ENCODE measurements at regions of chr22 and their contacts with region 1.

Region 1: GRCh38 chr22:50507991-50508884 is at the start of gene NCAPH2:
- DNase-seq: peak; percentile 83
- ATAC-seq: peak; percentile 69
- H3K4me3 ChIP-seq: peak within 1 kb of the TSS; percentile 100
- H3K27ac ChIP-seq: peak within 1 kb of the TSS; percentile 90
- H3K4me1 ChIP-seq: peaks cover 9% of the 10 kb centered on the region
- H3K27me3 ChIP-seq: no peaks in the 10 kb centered on the region
- CTCF ChIP-seq: peak in 1 of 3 experiments; percentile 33; a peak in 2 of 6 replicates
- EP300 ChIP-seq: no peak
- POLR2A ChIP-seq: peak; percentile 98
- RAD21 ChIP-seq: peak; percentile 16; the same call in 1 of the 2 replicates
- polyA plus RNA-seq, gene NCAPH2: 5.0 to 16.9 TPM

Region 2: GRCh38 chr22:50308536-50308935 is 199.7 kb before region 1 on chr22:
- CTCF ChIA-PET with region 1: no interaction called
- POLR2A ChIA-PET with region 1: no interaction called
- RAD21 ChIA-PET with region 1: no interaction called
- SMC1A ChIA-PET with region 1: no interaction called
- in situ Hi-C with region 1: no loop called
- intact Hi-C with region 1: no loop called
- DNase-seq: no peak
- ATAC-seq: no peak
- H3K4me3 ChIP-seq: no peak overlapping the region
- H3K27ac ChIP-seq: peak overlapping the region; percentile 44; the same call in 1 of the 2 replicates
- H3K4me1 ChIP-seq: peaks cover 36% of the 10 kb centered on the region
- H3K27me3 ChIP-seq: no peaks in the 10 kb centered on the region
- CTCF ChIP-seq: no peak
- EP300 ChIP-seq: no peak
- POLR2A ChIP-seq: no peak
- RAD21 ChIP-seq: no peak

Region 3: DNA sequence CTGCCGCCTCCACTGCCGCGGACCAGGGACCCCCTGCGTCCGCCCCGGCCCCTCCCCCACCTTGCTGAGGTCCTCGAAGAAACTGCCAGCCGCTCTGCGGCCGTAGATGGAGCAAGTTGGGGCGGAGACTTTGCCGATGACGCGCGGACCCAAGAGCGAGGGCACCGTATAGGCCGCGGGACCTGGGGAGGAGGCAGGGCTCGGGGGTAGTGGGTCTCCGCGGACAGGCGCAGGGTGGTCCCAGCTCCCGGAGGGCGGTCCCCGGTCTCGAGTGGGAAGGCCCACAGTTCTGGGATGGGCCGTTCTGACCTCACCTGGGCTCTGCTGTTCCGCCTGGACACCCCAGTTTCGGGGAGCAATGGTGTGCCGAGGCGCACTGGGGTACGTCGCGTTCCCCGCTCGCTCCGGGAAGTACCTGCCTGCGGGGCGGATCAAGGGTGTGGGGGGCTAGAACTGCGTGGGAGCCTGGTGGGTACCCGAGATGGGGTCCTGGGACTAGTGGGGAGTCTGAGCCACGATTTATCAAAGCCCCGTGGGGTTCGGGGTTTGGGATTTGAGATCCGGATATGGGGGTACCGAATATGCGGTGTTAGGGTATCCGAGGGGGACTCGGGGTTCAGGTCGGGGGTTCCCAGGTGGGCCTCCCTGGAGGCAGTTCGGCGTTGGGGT is 22.8 kb after region 1 on chr22:
- CTCF ChIA-PET with region 1: interaction called, 38 read pairs
- POLR2A ChIA-PET with region 1: interaction called, 84 read pairs
- RAD21 ChIA-PET with region 1: interaction called, 64 read pairs
- SMC1A ChIA-PET with region 1: interaction called, 16 read pairs
- in situ Hi-C with region 1: no loop called
- intact Hi-C with region 1: no loop called
- DNase-seq: no peak
- ATAC-seq: peak; percentile 53
- H3K4me3 ChIP-seq: peak overlapping the region; percentile 78
- H3K27ac ChIP-seq: peak overlapping the region; percentile 100
- H3K4me1 ChIP-seq: peaks cover 41% of the 10 kb centered on the region
- H3K27me3 ChIP-seq: no peaks in the 10 kb centered on the region
- CTCF ChIP-seq: no peak
- EP300 ChIP-seq: no peak
- POLR2A ChIP-seq: no peak
- RAD21 ChIP-seq: no peak

Region 4: GRCh38 chr22:50537765-50538164 is 29.5 kb after region 1 on chr22:
- CTCF ChIA-PET with region 1: no interaction called
- POLR2A ChIA-PET with region 1: interaction called, 13 read pairs
- RAD21 ChIA-PET with region 1: interaction called, 8 read pairs
- SMC1A ChIA-PET with region 1: no interaction called
- in situ Hi-C with region 1: no loop called
- intact Hi-C with region 1: no loop called
- DNase-seq: no peak
- ATAC-seq: no peak
- H3K4me3 ChIP-seq: peak overlapping the region; percentile 28; the same call in 1 of the 2 replicates
- H3K27ac ChIP-seq: peak overlapping the region; percentile 100
- H3K4me1 ChIP-seq: peaks cover 68% of the 10 kb centered on the region
- H3K27me3 ChIP-seq: no peaks in the 10 kb centered on the region
- CTCF ChIP-seq: no peak
- EP300 ChIP-seq: no peak
- POLR2A ChIP-seq: no peak
- RAD21 ChIP-seq: no peak

Measured in GM12878 (cell line).